Aorta (tissue), 5 donors: ENCODE measurements at regions of chr5 and their contacts with region 1.

Region 1: DNA sequence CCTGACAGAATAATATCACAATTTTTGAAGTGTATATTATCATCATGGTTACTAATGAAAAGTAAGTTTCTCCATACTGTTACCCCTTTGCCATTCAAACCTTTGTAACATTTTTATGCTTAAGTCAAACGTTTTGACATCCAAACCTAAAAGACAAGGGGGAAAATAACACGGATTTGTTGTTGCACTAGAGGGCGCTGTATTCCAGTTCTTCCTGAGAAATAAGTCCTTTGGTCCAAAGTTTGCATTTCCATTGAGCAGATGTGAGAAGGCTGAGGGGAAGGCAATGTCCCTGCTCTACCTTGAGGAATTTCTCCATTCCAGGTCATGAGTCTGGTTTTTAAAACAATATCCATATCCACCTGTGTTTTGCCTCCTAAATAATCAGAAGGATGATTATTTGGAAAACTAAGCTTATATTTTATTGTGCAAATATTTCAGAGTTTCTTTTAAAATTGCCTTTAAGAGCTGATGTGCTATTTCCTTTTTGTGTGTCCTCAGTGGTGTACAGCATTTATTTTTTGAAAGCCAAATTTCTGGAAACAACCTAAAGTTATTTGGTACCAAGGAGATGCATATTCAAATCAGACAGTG is 9.7 kb downstream of the LECT2 start:
- DNase-seq: no peak
- ATAC-seq: peak; percentile 73
- H3K4me3 ChIP-seq: no peak overlapping the region
- H3K27ac ChIP-seq: no peak overlapping the region
- H3K4me1 ChIP-seq: no peaks in the 10 kb centered on the region
- H3K27me3 ChIP-seq: no peaks in the 10 kb centered on the region

Region 2: DNA sequence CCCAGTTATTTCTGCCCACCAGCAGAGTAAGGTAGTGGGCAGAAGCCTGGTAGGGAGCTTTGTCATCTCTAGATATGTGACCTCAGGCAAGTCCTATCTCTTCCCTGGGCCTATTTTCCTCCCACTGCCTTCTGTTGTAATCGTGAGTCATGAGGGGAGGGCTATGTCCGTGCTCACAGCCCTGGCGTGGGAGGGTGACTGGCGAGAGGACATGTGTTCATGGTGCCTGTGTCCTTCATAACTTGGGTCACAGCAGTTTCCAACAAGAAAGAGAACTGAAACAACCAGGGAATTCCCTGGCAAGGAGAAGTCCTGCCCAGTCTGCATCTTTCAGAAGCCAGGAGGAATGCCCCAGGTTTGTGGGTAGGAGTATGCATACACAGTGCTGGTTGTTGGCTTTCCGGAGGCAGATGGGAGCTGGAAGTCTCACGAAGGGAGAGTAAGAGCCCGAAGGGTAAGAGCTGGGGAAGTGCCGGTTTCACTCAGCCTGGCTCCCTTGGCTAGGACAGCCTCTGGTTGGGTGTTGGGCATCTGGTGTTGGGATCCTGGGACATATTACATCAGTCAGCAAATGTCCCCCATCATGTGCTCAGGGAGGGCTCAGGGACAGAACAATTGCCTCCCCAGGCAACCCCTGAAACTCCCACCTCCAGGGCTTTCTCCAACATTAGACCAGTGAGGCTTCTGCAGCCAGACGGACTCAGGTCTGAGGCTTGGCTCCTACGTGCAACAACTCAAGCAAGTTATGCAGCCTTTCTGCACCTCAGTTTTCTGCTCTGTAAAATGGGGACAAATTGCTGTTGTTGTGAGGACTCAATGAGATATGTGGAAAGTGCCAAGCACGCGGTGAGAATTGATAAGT is 488.6 kb before region 1 on chr5:
- intact Hi-C with region 1: no loop called
- DNase-seq: peak; percentile 80 to 87
- ATAC-seq: no peak
- H3K4me3 ChIP-seq: no peak overlapping the region
- H3K27ac ChIP-seq: no peak overlapping the region
- H3K4me1 ChIP-seq: peaks cover 0 to 7% of the 10 kb centered on the region in 2 donors
- H3K27me3 ChIP-seq: no peaks in the 10 kb centered on the region

Region 3: DNA sequence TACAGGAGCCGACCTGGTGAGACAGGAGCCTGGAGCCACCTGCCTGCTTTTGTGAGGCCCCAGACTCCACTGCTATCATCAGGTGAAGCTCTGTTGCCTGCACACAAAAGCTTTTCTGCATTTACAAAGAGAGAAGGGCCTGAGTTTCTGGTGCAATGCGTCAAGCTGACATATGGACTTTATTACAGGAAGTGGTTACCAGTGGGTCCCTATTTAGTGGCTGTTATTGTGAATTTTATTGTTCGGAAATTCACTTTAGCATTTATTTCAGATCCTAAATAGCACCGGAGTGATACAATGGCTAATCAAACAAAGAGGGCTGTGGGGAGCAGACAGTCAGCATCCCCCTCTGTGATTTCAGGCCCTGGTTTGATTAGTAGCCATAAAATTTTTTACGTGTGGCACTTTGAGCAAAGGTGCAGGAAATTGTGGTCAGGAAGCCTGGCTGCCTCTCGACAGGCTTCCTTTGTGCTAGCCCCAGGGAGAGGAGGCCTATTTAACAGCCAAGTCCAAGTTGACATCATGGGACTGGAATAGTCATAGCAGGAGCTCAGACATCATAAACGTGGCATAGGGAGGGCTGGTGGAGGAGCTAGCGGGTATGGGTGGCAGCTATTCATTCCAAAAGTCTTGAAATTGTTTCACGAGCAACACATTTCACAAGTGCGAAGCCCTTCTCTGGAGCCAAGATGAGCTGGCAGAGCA is 92.1 kb after region 1 on chr5:
- intact Hi-C with region 1: no loop called
- DNase-seq: peak in 1 of 2 donors; percentile 70
- ATAC-seq: peak; percentile 84
- H3K4me3 ChIP-seq: no peak overlapping the region
- H3K27ac ChIP-seq: peak overlapping the region; percentile 32 to 55
- H3K4me1 ChIP-seq: no peaks in the 10 kb centered on the region
- H3K27me3 ChIP-seq: no peaks in the 10 kb centered on the region

Region 4: GRCh38 chr5:136174021-136174659 is 229.1 kb after region 1 on chr5:
- intact Hi-C with region 1: loop called (anchors 10 kb)
- DNase-seq: no peak
- ATAC-seq: no peak
- H3K4me3 ChIP-seq: no peak overlapping the region
- H3K27ac ChIP-seq: no peak overlapping the region
- H3K4me1 ChIP-seq: no peaks in the 10 kb centered on the region
- H3K27me3 ChIP-seq: no peaks in the 10 kb centered on the region